Heart right ventricle (tissue), 16 donors: ENCODE measurements at regions of chr16 and their contacts with region 1.

Region 1: DNA sequence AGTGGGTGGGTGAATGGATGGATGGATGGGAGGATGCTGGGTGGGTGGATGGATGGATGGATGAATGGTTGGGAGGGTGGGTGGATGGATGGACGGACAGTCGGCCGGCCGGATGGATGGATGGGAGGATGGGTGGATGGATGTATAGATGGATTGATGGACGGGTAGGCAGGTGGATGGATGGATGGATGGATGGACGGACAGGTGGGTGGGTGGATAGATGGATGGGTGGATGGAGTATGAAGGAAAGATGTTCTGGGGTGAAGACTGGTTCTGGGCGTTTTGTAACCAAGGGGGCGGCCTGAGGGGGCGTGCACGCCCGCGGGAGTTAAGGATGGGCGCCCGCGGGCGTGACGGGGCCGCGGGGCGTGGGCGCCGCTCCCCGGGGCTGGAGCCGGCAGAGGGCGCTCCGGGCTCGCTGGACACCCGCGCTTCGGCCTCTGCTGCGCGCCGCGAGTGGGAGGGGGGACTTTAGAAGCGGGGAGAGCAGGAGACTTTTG is at the start of gene NECAB2:
- DNase-seq: peak; percentile 40 to 62
- ATAC-seq: peak in 6 of 8 donors; percentile 22 to 65 (median 42)
- H3K4me3 ChIP-seq: peak within 1 kb of the TSS in 9 of 10 donors; percentile 29 to 47 (median 38)
- H3K27ac ChIP-seq: no peak within 1 kb of the TSS
- H3K4me1 ChIP-seq: peaks cover 0 to 10% (median 0%) of the 10 kb centered on the region in 9 donors
- H3K27me3 ChIP-seq: peaks cover 0 to 24% (median 8%) of the 10 kb centered on the region in 7 donors
- CTCF ChIP-seq: peak; percentile 33 to 81 (median 69)
- total RNA-seq, gene NECAB2: 0.32 to 1.1 (median 0.90) TPM

Region 2: DNA sequence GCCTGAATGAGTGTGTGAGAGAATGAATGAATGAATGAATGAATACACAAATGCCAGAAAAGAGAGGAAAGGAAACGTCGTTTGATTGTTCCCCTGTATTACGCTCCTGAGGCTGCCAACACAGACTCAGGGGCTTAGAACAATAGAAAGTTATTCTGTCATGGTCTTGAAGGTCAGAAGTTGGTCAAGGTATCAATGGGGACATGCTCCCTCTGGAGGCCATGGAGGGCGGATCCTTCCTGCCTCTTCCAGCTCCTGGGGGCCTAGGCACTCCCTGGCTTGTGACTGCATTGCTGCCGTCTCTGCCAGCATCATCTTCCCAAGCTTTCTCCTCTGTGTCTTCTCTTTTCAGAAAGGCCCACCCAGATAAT is 76.2 kb after region 1 on chr16:
- intact Hi-C with region 1: loop called in 2 of 10 experiments (anchors 5 to 10 kb)
- DNase-seq: no peak
- ATAC-seq: peak in 2 of 8 donors; percentile 29 to 63
- H3K4me3 ChIP-seq: no peak overlapping the region
- H3K27ac ChIP-seq: no peak overlapping the region
- H3K4me1 ChIP-seq: peaks cover 0 to 17% (median 6%) of the 10 kb centered on the region in 9 donors
- H3K27me3 ChIP-seq: peaks cover 0 to 40% (median 6%) of the 10 kb centered on the region in 7 donors
- CTCF ChIP-seq: peak in 6 of 9 donors; percentile 23 to 44 (median 32)

Region 3: GRCh38 chr16:84055366-84055765 is 87.5 kb after region 1 on chr16:
- intact Hi-C with region 1: loop called in 5 of 10 experiments (anchors 2 to 5 kb)
- DNase-seq: peak; percentile 54 to 71
- ATAC-seq: peak in 7 of 8 donors; percentile 56 to 87 (median 74)
- H3K4me3 ChIP-seq: no peak overlapping the region
- H3K27ac ChIP-seq: peak overlapping the region in 9 of 10 donors; percentile 12 to 71 (median 52)
- H3K4me1 ChIP-seq: peaks cover 3 to 47% (median 41%) of the 10 kb centered on the region in 9 donors
- H3K27me3 ChIP-seq: no peaks in the 10 kb centered on the region
- CTCF ChIP-seq: no peak